ENCODE measurements at regions of chr6 and their contacts with region 1.

Region 1: DNA sequence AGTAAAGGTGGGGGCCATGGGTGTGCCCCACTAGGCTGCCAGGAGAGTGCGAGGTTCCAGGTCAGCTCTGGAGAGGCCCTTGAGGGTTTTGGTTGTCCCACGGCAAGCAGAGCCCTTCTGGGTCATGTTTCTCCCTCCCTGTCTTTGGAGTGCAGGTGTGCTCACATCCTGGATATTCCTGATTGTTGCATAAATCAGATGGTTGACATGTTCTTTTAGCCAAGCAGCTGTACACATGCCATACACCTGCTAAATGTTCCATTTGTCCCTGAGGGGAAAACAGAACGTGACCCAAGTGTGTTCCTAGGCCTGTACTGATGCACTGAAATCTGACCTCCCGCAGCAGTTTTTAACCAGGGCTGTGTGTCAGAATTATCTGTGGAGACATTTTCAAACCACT is 77.5 kb upstream of the BEND3 start:
- DNase-seq: no peak
- ATAC-seq: no peak
- H3K4me3 ChIP-seq: no peak overlapping the region
- H3K4me3 Mint-ChIP-seq: no peak overlapping the region
- H3K27ac ChIP-seq: no peak overlapping the region
- H3K27ac Mint-ChIP-seq: no peak overlapping the region
- H3K4me1 ChIP-seq: no peaks in the 10 kb centered on the region
- H3K4me1 Mint-ChIP-seq: no peaks in the 10 kb centered on the region
- H3K27me3 ChIP-seq: no peaks in the 10 kb centered on the region
- H3K27me3 Mint-ChIP-seq: no peaks in the 10 kb centered on the region

Region 2: GRCh38 chr6:108766419-108766818 is 1573.6 kb after region 1 on chr6:
- CTCF ChIA-PET with region 1: interaction called in 1 of 2 experiments, 11 read pairs
- POLR2A ChIA-PET with region 1: no interaction called
- DNase-seq: no peak
- ATAC-seq: no peak
- H3K4me3 ChIP-seq: no peak overlapping the region
- H3K4me3 Mint-ChIP-seq: no peak overlapping the region
- H3K27ac ChIP-seq: no peak overlapping the region
- H3K27ac Mint-ChIP-seq: no peak overlapping the region
- H3K4me1 ChIP-seq: no peaks in the 10 kb centered on the region
- H3K4me1 Mint-ChIP-seq: peaks cover 3 to 7% (median 7%) of the 10 kb centered on the region in 3 donors
- H3K27me3 ChIP-seq: peaks cover 0 to 5% of the 10 kb centered on the region in 2 experiments
- H3K27me3 Mint-ChIP-seq: peaks cover 0 to 3% of the 10 kb centered on the region in 2 donors

Measured in T-cell (primary cell).